ENCODE measurements at regions of chr6 and their contacts with region 1.

Region 1: GRCh38 chr6:149493761-149494320 is 9.0 kb upstream of the ZC3H12D start:
- DNase-seq: no peak
- ATAC-seq: no peak
- H3K4me3 ChIP-seq: no peak overlapping the region
- H3K4me3 Mint-ChIP-seq: no peak overlapping the region
- H3K27ac ChIP-seq: no peak overlapping the region
- H3K27ac Mint-ChIP-seq: peak overlapping the region; percentile 8
- H3K4me1 ChIP-seq: peaks cover 39% of the 10 kb centered on the region
- H3K4me1 Mint-ChIP-seq: peaks cover 57% of the 10 kb centered on the region
- H3K27me3 ChIP-seq: no peaks in the 10 kb centered on the region
- H3K27me3 Mint-ChIP-seq: no peaks in the 10 kb centered on the region
- CTCF ChIP-seq: no peak

Region 2: DNA sequence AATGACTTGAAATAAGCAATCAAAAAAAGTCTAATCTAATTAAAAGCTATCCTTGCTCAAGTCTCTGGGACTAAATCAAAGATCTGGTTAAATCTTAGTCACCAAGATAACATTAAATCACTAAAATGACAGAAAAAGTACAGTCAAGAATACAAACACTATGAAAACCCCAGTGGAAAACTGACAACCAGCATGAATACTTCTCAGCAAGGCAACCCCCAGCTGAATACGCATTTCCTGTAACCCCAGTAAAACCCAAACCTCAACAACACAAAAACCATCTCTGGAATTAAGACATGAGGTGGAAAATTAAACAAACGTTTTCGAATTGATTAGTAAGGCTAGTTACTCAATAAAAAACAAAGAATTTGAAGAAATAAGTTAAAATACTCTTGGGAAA is 14.6 kb after region 1 on chr6:
- CTCF ChIA-PET with region 1: interaction called, 13 read pairs
- POLR2A ChIA-PET with region 1: interaction called, 13 read pairs
- intact Hi-C with region 1: loop called in 1 of 2 experiments (anchors 1 kb)
- DNase-seq: peak in 4 of 9 experiments; percentile 39 to 86 (median 65)
- ATAC-seq: peak; percentile 91
- H3K4me3 ChIP-seq: no peak overlapping the region
- H3K4me3 Mint-ChIP-seq: no peak overlapping the region
- H3K27ac ChIP-seq: peak overlapping the region; percentile 28 to 51
- H3K27ac Mint-ChIP-seq: peak overlapping the region; percentile 19
- H3K4me1 ChIP-seq: peaks cover 22% of the 10 kb centered on the region
- H3K4me1 Mint-ChIP-seq: peaks cover 28% of the 10 kb centered on the region
- H3K27me3 ChIP-seq: no peaks in the 10 kb centered on the region
- H3K27me3 Mint-ChIP-seq: no peaks in the 10 kb centered on the region
- CTCF ChIP-seq: no peak